ENCODE measurements at regions of chr12 and their contacts with region 1.

Region 1: DNA sequence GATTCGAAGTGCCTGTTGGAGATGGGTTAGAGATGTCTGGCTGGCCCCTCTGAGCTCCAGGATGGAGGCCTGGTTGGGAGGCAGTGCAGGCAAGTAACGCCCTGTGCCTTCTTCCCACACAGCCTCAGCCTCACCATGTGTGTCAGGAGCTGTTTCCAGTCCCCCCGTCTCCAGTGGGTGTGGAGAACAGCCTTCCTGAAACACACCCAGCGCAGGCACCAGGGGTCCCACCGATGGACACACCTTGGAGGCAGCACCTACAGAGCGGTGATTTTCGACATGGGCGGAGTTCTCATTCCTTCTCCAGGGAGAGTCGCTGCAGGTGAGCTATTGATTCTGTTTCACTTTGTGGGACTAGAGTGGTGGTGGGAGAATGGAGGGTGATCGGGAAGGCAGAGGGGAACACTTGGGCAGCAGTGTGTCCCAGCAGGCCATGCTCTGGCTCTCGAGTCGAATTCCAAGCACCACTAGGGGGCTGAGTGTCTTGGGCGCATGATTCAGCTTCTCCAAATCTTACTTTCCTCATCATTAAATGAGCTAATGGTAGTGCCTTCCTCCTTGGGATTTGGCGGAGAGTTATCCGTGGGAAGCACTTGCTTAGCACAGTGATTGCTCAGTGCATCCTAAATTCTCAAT is 6.8 kb downstream of the ACAD10 start:
- DNase-seq: no peak
- CTCF ChIP-seq: peak; percentile 29

Region 2: GRCh38 chr12:111819191-111820150 is 126.8 kb after region 1 on chr12:
- in situ Hi-C with region 1: loop called (anchors 10 kb)
- DNase-seq: no peak
- CTCF ChIP-seq: no peak